Heart right ventricle (tissue), 16 donors: ENCODE measurements at regions of chrX and their contacts with region 1.

Region 1: GRCh38 chrX:39730662-39731397 is 366.9 kb downstream of the BCOR start:
- DNase-seq: peak; percentile 59 to 67
- ATAC-seq: peak; percentile 67 to 86 (median 83)
- H3K4me3 ChIP-seq: no peak overlapping the region
- H3K27ac ChIP-seq: peak overlapping the region in 3 of 10 donors; percentile 22 to 47 (median 25)
- H3K4me1 ChIP-seq: peaks cover 0 to 44% (median 19%) of the 10 kb centered on the region in 9 donors
- H3K27me3 ChIP-seq: peaks cover 0 to 36% (median 0%) of the 10 kb centered on the region in 7 donors
- CTCF ChIP-seq: peak; percentile 15 to 71 (median 61)

Region 2: DNA sequence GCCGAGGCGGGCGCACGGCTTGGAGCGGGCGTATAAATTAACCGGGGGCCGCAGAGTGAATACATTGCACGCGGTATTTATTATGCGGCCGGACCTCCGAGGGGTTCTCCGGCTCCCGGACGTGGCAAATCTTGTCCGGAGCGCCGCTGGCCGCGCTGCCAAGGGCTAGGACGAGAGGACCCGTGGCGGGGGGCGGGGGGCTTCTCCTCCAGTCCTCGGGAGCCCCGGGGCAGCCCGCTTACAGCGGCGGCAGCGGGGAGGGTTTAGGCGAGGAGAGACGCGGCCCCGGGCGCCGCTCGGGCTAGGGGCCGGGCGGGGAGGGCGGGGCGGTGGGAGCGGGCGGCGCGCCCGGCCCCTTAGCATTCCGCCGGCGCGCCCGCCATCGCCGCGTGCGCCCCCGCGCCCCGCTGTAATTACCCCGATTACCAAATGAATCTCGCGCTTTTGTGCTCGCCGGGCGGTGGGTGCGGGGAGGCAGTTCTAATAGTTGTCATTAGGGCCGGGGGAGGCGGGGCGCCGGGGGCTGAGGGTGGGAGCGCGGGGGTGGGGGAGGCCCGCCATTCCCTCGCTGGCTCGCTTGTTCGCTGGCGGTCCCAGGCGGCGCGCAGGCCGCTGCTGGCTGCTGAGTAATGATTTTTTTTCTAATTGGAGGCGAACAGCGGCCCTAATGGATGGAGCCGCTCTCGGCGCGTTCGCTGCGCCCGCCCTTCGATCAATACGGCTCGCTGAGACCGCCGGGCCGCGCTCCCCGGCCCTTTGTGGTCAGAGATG is 90.3 kb after region 1 on chrX:
- intact Hi-C with region 1: loop called in 2 of 10 experiments (anchors 5 to 10 kb)
- DNase-seq: peak in 1 of 2 donors; percentile 19
- ATAC-seq: peak in 7 of 8 donors; percentile 40 to 83 (median 43)
- H3K4me3 ChIP-seq: peak overlapping the region; percentile 3 to 54 (median 44)
- H3K27ac ChIP-seq: peak overlapping the region in 2 of 10 donors; percentile 25 to 40
- H3K4me1 ChIP-seq: peaks cover 0 to 15% (median 9%) of the 10 kb centered on the region in 9 donors
- H3K27me3 ChIP-seq: peaks cover 0 to 84% (median 0%) of the 10 kb centered on the region in 7 donors
- CTCF ChIP-seq: peak in 1 of 9 donors; percentile 8

Region 3: DNA sequence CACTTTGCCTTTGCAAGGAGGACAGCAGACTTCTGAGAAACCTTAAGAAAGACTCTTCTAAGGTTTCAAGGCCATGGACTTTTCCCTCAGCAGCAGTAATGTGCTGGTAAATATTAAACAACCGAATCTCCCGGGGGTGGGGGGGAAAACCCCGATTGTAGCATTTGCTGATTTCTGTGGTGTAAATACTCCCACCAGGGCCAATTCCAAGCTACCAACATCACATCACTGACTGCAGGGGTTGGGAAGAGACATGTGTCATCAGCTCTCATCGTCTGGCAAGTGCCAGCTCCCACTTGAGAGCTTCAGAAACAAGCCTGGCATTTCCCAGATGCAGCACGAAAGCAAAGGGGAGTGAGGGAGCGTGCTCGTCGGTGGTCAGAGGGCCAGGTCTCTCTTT is 265.7 kb after region 1 on chrX:
- intact Hi-C with region 1: loop called in 1 of 10 experiments (anchors 10 kb)
- DNase-seq: no peak
- ATAC-seq: peak in 2 of 8 donors; percentile 47 to 52
- H3K4me3 ChIP-seq: no peak overlapping the region
- H3K27ac ChIP-seq: no peak overlapping the region
- H3K4me1 ChIP-seq: no peaks in the 10 kb centered on the region
- H3K27me3 ChIP-seq: peaks cover 0 to 17% (median 0%) of the 10 kb centered on the region in 7 donors
- CTCF ChIP-seq: no peak

Region 4: DNA sequence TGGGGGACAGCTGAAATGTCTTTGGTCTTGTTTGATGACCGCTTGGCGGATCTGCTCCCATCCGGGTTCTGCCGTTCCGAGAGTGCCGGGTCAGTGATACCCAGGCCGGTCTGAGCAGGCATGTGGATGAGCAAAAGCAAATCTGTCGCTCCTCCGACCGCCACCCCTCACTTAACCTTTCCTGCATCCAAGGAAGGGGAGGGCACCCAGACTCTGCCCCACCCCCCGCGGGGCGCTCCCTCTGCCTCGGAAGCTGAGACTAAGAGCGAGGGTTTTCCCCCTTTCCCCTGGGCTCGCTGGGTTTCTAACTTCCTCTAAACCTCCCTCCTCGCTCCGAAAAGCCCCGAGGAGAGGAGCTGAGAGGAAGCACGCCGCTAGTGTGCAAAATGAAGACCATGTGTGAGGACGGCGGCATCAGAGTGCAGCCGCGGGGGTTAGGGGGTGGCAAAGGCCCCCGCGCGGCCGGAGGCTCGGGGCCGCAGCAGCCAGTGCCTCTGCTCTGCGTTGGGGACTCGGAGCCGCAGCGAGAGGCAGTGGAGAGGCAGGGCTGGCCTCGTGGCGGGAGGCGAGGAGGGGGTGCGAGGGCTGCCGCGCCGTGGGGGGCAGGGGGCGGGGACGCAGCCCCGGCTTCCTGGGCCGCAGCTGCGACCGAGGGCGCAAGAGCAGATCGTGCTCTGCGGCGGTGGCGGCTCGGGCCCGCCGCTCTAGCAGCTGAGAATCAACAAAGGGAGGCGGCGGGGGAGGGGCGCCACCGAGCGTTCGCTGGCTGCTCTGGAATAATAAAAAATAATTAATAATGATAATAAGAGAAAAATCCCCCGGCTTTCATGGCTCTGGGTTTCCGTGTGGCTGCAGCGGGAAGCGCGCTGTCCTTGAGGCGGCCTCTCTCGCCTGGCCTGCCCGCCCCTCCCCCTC is 422.8 kb after region 1 on chrX:
- intact Hi-C with region 1: loop called in 1 of 10 experiments (anchors 10 kb)
- DNase-seq: no peak
- ATAC-seq: peak; percentile 2 to 39 (median 28)
- H3K4me3 ChIP-seq: peak overlapping the region; percentile 32 to 56 (median 53)
- H3K27ac ChIP-seq: peak overlapping the region; percentile 21 to 89 (median 82)
- H3K4me1 ChIP-seq: peaks cover 6 to 66% (median 45%) of the 10 kb centered on the region in 9 donors
- H3K27me3 ChIP-seq: peaks cover 0 to 100% (median 0%) of the 10 kb centered on the region in 7 donors
- CTCF ChIP-seq: peak in 4 of 9 donors; percentile 6 to 41 (median 16)

Region 5: DNA sequence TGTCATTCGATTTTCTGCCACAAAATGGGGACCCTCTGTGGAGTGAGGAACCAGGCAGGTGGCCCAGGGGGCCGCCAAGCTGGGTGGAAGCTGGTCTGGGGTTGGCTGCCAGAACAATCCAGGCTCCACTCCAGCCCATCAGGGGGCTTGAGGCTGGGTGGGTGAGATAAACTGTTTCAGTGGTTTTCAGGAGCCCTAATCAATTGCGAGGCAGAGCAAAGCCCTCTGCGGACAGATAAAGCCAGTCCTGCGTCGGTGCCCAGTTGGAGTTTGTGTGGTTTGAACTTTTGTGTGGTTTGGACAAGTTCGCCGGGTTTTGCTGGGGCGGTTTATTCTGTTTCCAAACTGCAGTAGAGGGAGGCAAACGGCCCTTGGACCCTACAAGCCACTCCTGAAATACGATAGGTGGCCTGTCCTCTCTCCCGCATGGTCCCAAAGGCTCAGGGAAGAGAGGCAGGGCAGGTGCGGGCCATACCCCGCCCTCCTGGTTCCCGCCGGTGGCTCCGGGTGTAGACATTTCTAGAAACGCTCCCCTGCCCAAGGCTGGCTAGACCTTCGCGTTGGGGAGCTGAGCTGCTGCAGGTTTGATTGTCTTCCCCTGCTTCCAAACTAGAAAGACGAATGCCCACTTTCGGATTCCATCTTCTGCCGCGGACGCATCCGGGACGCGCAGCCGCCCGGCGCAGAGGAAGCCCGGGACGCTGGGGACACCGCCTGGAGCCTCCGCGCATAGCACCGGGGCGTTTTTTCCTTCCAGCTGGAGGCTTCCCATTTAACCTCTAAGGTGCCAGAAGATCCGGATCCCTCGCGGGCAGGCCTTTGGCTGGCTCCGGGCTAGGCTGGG is 535.9 kb after region 1 on chrX:
- intact Hi-C with region 1: loop called in 6 of 10 experiments (anchors 10 kb)
- DNase-seq: peak; percentile 64 to 70
- ATAC-seq: peak; percentile 85 to 95 (median 92)
- H3K4me3 ChIP-seq: peak overlapping the region; percentile 25 to 61 (median 52)
- H3K27ac ChIP-seq: peak overlapping the region in 9 of 10 donors; percentile 65 to 83 (median 77)
- H3K4me1 ChIP-seq: peaks cover 0 to 39% (median 8%) of the 10 kb centered on the region in 9 donors
- H3K27me3 ChIP-seq: peaks cover 0 to 32% (median 0%) of the 10 kb centered on the region in 7 donors
- CTCF ChIP-seq: peak; percentile 38 to 81 (median 63)